Adrenal gland (tissue), 19 donors: ENCODE measurements at regions of chr9 and their contacts with region 1.

Region 1: DNA sequence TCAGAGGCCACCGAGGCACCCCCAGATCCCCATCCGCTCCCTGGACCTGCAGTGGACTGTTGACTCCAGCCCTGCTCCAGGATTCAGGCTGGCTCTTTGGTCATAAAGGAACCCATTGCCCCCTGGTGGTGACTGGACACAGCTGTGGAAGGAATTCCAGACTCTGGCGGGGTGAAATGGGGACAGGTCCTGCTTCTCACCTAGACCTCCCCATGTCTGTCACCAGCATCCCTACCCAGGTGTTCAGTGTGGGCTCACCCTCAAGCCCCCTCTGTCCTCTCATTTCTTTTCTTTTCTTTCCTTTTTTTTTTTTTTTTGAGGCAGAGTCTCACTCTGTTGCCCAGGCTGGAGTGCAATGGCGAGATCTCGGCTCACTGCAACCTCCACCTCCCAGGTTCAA is 25.5 kb upstream of the STXBP1 start:
- DNase-seq: peak; percentile 82 to 95 (median 90)
- H3K4me3 ChIP-seq: no peak overlapping the region
- H3K27ac ChIP-seq: peak overlapping the region in 1 of 5 donors; percentile 49
- H3K4me1 ChIP-seq: peaks cover 11 to 12% of the 10 kb centered on the region in 2 donors
- H3K27me3 ChIP-seq: no peaks in the 10 kb centered on the region
- CTCF ChIP-seq: peak; percentile 87 to 96 (median 95)
- POLR2A ChIP-seq: no peak

Region 2: GRCh38 chr9:127503947-127504782 is 82.4 kb before region 1 on chr9:
- intact Hi-C with region 1: loop called (anchors 2 to 5 kb)
- DNase-seq: peak; percentile 85 to 95 (median 92)
- H3K4me3 ChIP-seq: no peak overlapping the region
- H3K27ac ChIP-seq: peak overlapping the region; percentile 72 to 93 (median 76)
- H3K4me1 ChIP-seq: peaks cover 25 to 45% of the 10 kb centered on the region in 2 donors
- H3K27me3 ChIP-seq: no peaks in the 10 kb centered on the region
- CTCF ChIP-seq: peak; percentile 78 to 95 (median 90)
- POLR2A ChIP-seq: no peak

Region 3: GRCh38 chr9:127519301-127520166 is 67.0 kb before region 1 on chr9:
- intact Hi-C with region 1: loop called in 1 of 2 experiments (anchors 5 kb)
- DNase-seq: peak in 2 of 7 donors; percentile 54 to 59
- H3K4me3 ChIP-seq: no peak overlapping the region
- H3K27ac ChIP-seq: peak overlapping the region in 3 of 5 donors; percentile 64 to 85 (median 80)
- H3K4me1 ChIP-seq: peaks cover 31 to 42% of the 10 kb centered on the region in 2 donors
- H3K27me3 ChIP-seq: no peaks in the 10 kb centered on the region
- CTCF ChIP-seq: no peak
- POLR2A ChIP-seq: no peak

Region 4: DNA sequence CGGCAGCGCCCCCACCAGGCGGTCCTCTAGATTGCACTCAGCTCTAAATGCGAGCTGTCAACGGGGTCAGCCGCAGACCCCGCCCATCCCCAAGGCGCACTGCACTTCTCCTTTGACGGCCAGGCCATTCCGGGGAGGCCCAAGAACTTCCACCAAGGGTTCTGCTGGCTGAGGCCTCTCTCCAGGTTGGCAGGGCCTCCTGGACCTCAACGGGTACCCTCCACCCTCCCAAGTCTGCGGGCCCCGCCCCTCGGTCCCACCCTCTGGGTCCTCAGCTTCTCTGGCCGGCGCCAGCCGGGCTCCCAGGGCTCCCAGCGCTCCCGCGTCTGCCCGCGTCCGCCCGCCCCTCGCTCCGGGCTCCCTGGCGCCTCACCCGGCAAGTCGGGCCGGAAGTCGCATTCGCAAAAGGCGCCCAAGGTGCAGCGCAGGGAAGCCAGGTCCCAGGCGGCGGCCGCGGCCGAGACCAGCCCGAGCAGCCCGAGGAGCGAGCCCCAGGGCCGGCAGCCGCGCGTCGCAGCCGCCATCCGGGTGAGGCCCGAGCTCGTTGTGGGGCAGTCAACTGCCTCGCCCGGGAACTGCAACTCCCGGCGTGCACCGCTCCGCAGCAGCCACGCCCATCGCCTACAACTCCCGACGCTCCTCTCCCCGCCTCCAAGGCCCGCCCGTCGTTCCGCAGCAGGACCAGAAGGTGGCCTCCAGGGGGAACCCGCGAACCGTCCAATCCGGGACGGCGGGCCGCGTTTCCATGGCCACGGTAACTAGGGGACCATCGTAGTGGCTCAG is 148.4 kb after region 1 on chr9 and contains the start of gene TOR2A:
- intact Hi-C with region 1: loop called (anchors 2 to 5 kb)
- DNase-seq: peak; percentile 97 to 99 (median 98)
- H3K4me3 ChIP-seq: peak within 1 kb of the TSS; percentile 18 to 82 (median 54)
- H3K27ac ChIP-seq: peak within 1 kb of the TSS; percentile 71 to 95 (median 89)
- H3K4me1 ChIP-seq: peaks cover 6 to 13% of the 10 kb centered on the region in 2 donors
- H3K27me3 ChIP-seq: no peaks in the 10 kb centered on the region
- CTCF ChIP-seq: peak; percentile 92 to 99 (median 98)
- POLR2A ChIP-seq: peak; percentile 88 to 94
- total RNA-seq, gene TOR2A: 10.8 to 30.6 (median 17.9) TPM

Region 5: GRCh38 chr9:127921557-127922120 is 335.1 kb after region 1 on chr9:
- intact Hi-C with region 1: loop called (anchors 5 to 10 kb)
- DNase-seq: peak; percentile 61 to 87 (median 76)
- H3K4me3 ChIP-seq: no peak overlapping the region
- H3K27ac ChIP-seq: no peak overlapping the region
- H3K4me1 ChIP-seq: peaks cover 13 to 37% of the 10 kb centered on the region in 2 donors
- H3K27me3 ChIP-seq: peaks cover 13% of the 10 kb centered on the region
- CTCF ChIP-seq: peak; percentile 92 to 97 (median 95)
- POLR2A ChIP-seq: no peak